Astrocyte of the cerebellum (primary cell): ENCODE measurements at regions of chr1 and their contacts with region 1.

Region 1: GRCh38 chr1:18629659-18630510 is 761 bp upstream of the PAX7 start:
- DNase-seq: no peak
- H3K4me3 ChIP-seq: no peak overlapping the region
- CTCF ChIP-seq: no peak

Region 2: GRCh38 chr1:18581420-18581880 is 48.4 kb before region 1 on chr1:
- in situ Hi-C with region 1: no loop called
- DNase-seq: no peak
- H3K4me3 ChIP-seq: no peak overlapping the region
- CTCF ChIP-seq: peak; percentile 66

Region 3: GRCh38 chr1:18705811-18706210 is 75.9 kb after region 1 on chr1:
- in situ Hi-C with region 1: loop called (anchors 5 kb)
- DNase-seq: no peak
- H3K4me3 ChIP-seq: no peak overlapping the region
- CTCF ChIP-seq: no peak